Prostate gland (tissue), 2 donors: ENCODE measurements at regions of chr4 and their contacts with region 1.

Region 1: GRCh38 chr4:140252742-140253555 is 99.0 kb upstream of the MAML3 start:
- DNase-seq: peak; percentile 68
- H3K4me3 ChIP-seq: peak overlapping the region; percentile 43 to 64
- H3K27ac ChIP-seq: peak overlapping the region; percentile 91 to 96
- H3K4me1 ChIP-seq: peaks cover 16% of the 10 kb centered on the region
- H3K27me3 ChIP-seq: no peaks in the 10 kb centered on the region
- CTCF ChIP-seq: peak; percentile 79 to 98 (median 88)
- POLR2A ChIP-seq: no peak

Region 2: GRCh38 chr4:139295206-139295941 is 957.6 kb before region 1 on chr4:
- intact Hi-C with region 1: no loop called
- DNase-seq: peak; percentile 97
- H3K4me3 ChIP-seq: peak overlapping the region; percentile 71 to 92
- H3K27ac ChIP-seq: peak overlapping the region; percentile 87 to 91
- H3K4me1 ChIP-seq: peaks cover 6% of the 10 kb centered on the region
- H3K27me3 ChIP-seq: no peaks in the 10 kb centered on the region
- CTCF ChIP-seq: peak; percentile 94 to 98 (median 96)
- POLR2A ChIP-seq: peak; percentile 42

Region 3: GRCh38 chr4:139665690-139666529 is 587.0 kb before region 1 on chr4 and contains the start of gene MGST2:
- intact Hi-C with region 1: loop called (anchors 5 kb)
- DNase-seq: peak; percentile 83
- H3K4me3 ChIP-seq: peak within 1 kb of the TSS; percentile 47 to 53
- H3K27ac ChIP-seq: peak within 1 kb of the TSS; percentile 87 to 91
- H3K4me1 ChIP-seq: peaks cover 7% of the 10 kb centered on the region
- H3K27me3 ChIP-seq: no peaks in the 10 kb centered on the region
- CTCF ChIP-seq: no peak
- POLR2A ChIP-seq: peak; percentile 24
- total RNA-seq, gene MGST2: 101 to 135 TPM

Region 4: DNA sequence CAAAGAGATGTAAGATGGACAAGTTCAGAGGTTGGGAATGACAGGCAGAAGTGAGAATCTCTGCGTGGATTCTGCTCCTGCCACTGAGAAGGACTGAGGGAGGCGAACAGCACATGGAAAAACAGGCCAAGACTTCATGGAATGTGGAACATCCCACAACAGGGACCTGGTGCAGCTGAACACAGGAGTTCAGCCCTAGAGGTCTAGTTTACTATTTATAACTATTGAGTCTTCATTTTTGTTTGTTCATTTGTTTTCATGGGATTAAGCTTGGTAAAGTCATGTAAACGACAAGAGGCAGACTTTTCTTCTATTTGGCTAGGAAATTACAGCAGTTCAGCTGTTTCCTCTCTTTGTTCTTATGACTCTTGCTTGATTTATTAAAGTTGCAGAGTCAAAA is 333.4 kb before region 1 on chr4:
- intact Hi-C with region 1: loop called (anchors 10 kb)
- DNase-seq: no peak
- H3K4me3 ChIP-seq: no peak overlapping the region
- H3K27ac ChIP-seq: peak overlapping the region; percentile 53 to 72
- H3K4me1 ChIP-seq: peaks cover 33% of the 10 kb centered on the region
- H3K27me3 ChIP-seq: no peaks in the 10 kb centered on the region
- CTCF ChIP-seq: no peak
- POLR2A ChIP-seq: no peak

Region 5: GRCh38 chr4:140049024-140049848 is 203.7 kb before region 1 on chr4:
- intact Hi-C with region 1: loop called (anchors 5 kb)
- DNase-seq: peak; percentile 71
- H3K4me3 ChIP-seq: peak overlapping the region; percentile 22 to 24
- H3K27ac ChIP-seq: peak overlapping the region; percentile 69 to 78
- H3K4me1 ChIP-seq: no peaks in the 10 kb centered on the region
- H3K27me3 ChIP-seq: no peaks in the 10 kb centered on the region
- CTCF ChIP-seq: peak in 3 of 4 experiments; percentile 37 to 50 (median 37)
- POLR2A ChIP-seq: no peak

Region 6: GRCh38 chr4:140326395-140326993 is 73.5 kb after region 1 on chr4:
- intact Hi-C with region 1: loop called (anchors 10 kb)
- DNase-seq: no peak
- H3K4me3 ChIP-seq: no peak overlapping the region
- H3K27ac ChIP-seq: no peak overlapping the region
- H3K4me1 ChIP-seq: no peaks in the 10 kb centered on the region
- H3K27me3 ChIP-seq: no peaks in the 10 kb centered on the region
- CTCF ChIP-seq: peak; percentile 24 to 78 (median 60)
- POLR2A ChIP-seq: no peak